Mammary epithelial cell (primary cell): ENCODE measurements at regions of chr16 and their contacts with region 1.

Region 1: GRCh38 chr16:85316321-85316919 is 204.1 kb upstream of the CIBAR2 start:
- DNase-seq: peak; percentile 32
- H3K4me3 ChIP-seq: no peak overlapping the region
- H3K27ac ChIP-seq: no peak overlapping the region
- H3K4me1 ChIP-seq: peaks cover 16% of the 10 kb centered on the region
- H3K27me3 ChIP-seq: no peaks in the 10 kb centered on the region
- CTCF ChIP-seq: peak; percentile 70 to 93

Region 2: GRCh38 chr16:85399583-85400284 is 83.3 kb after region 1 on chr16:
- CTCF ChIA-PET with region 1: interaction called, 12 read pairs
- dilution Hi-C with region 1: no loop called
- in situ Hi-C with region 1: no loop called
- intact Hi-C with region 1: no loop called
- DNase-seq: no peak
- H3K4me3 ChIP-seq: no peak overlapping the region
- H3K27ac ChIP-seq: no peak overlapping the region
- H3K4me1 ChIP-seq: peaks cover 28% of the 10 kb centered on the region
- H3K27me3 ChIP-seq: no peaks in the 10 kb centered on the region
- CTCF ChIP-seq: no peak

Region 3: GRCh38 chr16:85428168-85428898 is 111.9 kb after region 1 on chr16:
- CTCF ChIA-PET with region 1: no interaction called
- dilution Hi-C with region 1: no loop called
- in situ Hi-C with region 1: no loop called
- intact Hi-C with region 1: loop called (anchors 5 kb)
- DNase-seq: no peak
- H3K4me3 ChIP-seq: no peak overlapping the region
- H3K27ac ChIP-seq: no peak overlapping the region
- H3K4me1 ChIP-seq: no peaks in the 10 kb centered on the region
- H3K27me3 ChIP-seq: no peaks in the 10 kb centered on the region
- CTCF ChIP-seq: peak; percentile 59 to 63

Region 4: GRCh38 chr16:85878874-85879273 is 562.5 kb after region 1 on chr16:
- CTCF ChIA-PET with region 1: no interaction called
- dilution Hi-C with region 1: no loop called
- in situ Hi-C with region 1: no loop called
- intact Hi-C with region 1: no loop called
- DNase-seq: peak; percentile 57
- H3K4me3 ChIP-seq: no peak overlapping the region
- H3K27ac ChIP-seq: no peak overlapping the region
- H3K4me1 ChIP-seq: no peaks in the 10 kb centered on the region
- H3K27me3 ChIP-seq: peaks cover 4% of the 10 kb centered on the region
- CTCF ChIP-seq: no peak